K562 (cell line): ENCODE measurements at regions of chr11 and their contacts with region 1.

Region 1: GRCh38 chr11:17197431-17197898 is 10.3 kb downstream of the PIK3C2A start:
- DNase-seq: no peak
- ATAC-seq: no peak
- H3K4me3 ChIP-seq: no peak overlapping the region
- H3K27ac ChIP-seq: no peak overlapping the region
- H3K4me1 ChIP-seq: no peaks in the 10 kb centered on the region; a peak in 1 of 5 replicates
- H3K27me3 ChIP-seq: no peaks in the 10 kb centered on the region
- CTCF ChIP-seq: no peak
- EP300 ChIP-seq: no peak
- POLR2A ChIP-seq: no peak
- RAD21 ChIP-seq: no peak

Region 2: DNA sequence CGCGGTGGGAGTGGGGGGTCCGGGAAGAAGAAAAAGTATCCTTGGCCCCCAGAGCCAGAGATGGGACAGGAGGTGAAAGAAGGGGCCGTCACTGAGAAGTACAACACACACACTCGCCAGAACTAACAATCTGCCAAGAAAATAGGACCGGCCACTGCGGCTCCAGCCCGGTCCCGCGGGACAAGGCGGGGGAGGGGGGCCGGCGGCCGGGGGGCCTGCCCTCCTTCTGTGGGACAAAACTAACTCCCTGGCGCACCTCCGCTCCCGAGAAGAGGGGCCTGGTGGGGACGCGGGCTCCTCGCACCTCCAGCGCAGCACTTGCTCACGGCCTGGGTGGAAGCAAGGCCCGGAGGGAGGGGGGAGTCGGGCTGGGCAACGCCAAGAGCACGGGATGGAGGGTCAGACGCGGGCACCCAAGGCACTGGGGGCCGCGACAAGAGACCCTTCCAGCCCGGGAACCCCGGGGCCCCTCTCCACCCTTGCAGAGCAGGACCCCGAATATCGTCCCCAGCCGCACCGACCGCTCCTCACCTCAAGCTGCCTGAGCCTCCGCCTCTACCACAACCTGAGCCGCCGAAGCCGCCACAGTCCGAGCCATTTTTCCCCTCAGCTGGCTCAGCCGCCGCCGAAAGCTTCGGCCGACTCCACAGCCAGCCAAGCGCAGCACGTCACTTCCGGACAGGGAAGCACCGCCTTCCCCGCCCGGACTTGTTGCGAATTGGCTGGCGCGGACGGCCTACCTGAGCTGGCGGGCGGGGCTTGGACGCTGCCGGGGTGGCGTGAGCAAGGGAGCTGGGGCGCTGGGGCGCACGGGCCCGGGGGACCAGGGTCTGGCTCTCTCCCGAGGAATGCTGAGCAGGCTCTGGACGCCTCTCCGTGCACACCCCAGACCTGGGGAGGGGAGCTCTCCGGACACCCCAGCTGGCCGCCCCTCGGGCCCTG is 10.1 kb after region 1 on chr11 and contains the start of gene PIK3C2A:
- CTCF ChIA-PET with region 1: no interaction called
- POLR2A ChIA-PET with region 1: interaction called, 12 read pairs
- in situ Hi-C with region 1: no loop called
- intact Hi-C with region 1: no loop called
- DNase-seq: peak; percentile 92 to 97 (median 93)
- ATAC-seq: peak; percentile 96
- H3K4me3 ChIP-seq: peak within 1 kb of the TSS; percentile 87
- H3K27ac ChIP-seq: peak within 1 kb of the TSS; percentile 76
- H3K4me1 ChIP-seq: peaks cover 11 to 13% of the 10 kb centered on the region in 2 experiments; a peak in 4 of 5 replicates
- H3K27me3 ChIP-seq: no peaks in the 10 kb centered on the region
- CTCF ChIP-seq: no peak
- EP300 ChIP-seq: no peak
- POLR2A ChIP-seq: peak; percentile 93
- RAD21 ChIP-seq: no peak
- polyA plus RNA-seq, gene PIK3C2A: 3.1 to 4.1 TPM